Sigmoid colon (tissue), 7 donors: ENCODE measurements at regions of chr3 and their contacts with region 1.

Region 1: DNA sequence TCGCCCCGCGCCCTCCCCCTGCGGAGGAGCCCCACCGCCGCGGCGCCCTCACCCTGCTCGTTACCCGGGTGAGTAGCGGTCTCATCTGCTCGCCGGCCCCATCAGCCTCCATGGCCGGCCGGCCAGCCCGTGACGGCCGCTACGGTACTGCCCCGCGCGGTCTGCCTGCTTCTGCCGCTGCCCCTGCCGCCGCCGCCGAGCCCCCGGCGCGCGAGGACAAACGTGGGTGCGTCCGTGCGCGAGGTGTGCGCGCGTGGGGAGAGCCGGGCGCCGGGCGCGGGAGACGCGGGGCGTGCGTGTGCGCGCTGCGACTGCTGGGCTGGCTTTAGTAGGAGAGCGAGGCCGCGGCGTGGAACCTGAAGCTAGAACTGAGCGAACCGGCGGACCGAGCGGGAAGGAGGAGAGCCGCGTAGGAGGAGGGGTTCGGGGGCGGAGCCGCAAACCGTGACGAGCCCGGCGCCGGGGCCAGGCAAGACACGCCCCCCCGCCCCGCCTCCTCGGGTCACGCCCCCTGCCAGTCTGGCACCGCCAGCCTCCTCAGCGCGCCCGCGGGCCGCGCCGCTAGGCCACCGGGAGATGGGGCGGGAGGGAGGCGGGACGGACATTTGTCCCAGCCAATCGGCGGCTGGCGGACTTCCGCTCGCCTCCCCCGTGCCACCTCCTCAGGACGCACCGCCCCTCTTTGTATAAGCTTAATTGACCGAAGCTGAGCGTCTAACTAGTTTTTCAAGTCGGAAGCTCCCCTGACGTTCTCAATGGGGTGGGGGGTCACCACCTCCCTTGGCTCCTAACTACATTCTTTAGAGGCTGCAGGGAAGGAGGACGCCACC is at the start of gene SLC4A7:
- DNase-seq: peak; percentile 99
- H3K4me3 ChIP-seq: peak within 1 kb of the TSS; percentile 62 to 99 (median 71)
- H3K27ac ChIP-seq: peak within 1 kb of the TSS; percentile 94 to 99 (median 95)
- H3K4me1 ChIP-seq: peaks cover 0 to 53% (median 42%) of the 10 kb centered on the region in 4 donors
- H3K27me3 ChIP-seq: no peaks in the 10 kb centered on the region
- CTCF ChIP-seq: no peak
- EP300 ChIP-seq: peak in 1 of 4 donors; percentile 24
- POLR2A ChIP-seq: peak; percentile 70 to 85
- total RNA-seq, gene SLC4A7: 63.8 to 91.0 (median 75.1) TPM

Region 2: DNA sequence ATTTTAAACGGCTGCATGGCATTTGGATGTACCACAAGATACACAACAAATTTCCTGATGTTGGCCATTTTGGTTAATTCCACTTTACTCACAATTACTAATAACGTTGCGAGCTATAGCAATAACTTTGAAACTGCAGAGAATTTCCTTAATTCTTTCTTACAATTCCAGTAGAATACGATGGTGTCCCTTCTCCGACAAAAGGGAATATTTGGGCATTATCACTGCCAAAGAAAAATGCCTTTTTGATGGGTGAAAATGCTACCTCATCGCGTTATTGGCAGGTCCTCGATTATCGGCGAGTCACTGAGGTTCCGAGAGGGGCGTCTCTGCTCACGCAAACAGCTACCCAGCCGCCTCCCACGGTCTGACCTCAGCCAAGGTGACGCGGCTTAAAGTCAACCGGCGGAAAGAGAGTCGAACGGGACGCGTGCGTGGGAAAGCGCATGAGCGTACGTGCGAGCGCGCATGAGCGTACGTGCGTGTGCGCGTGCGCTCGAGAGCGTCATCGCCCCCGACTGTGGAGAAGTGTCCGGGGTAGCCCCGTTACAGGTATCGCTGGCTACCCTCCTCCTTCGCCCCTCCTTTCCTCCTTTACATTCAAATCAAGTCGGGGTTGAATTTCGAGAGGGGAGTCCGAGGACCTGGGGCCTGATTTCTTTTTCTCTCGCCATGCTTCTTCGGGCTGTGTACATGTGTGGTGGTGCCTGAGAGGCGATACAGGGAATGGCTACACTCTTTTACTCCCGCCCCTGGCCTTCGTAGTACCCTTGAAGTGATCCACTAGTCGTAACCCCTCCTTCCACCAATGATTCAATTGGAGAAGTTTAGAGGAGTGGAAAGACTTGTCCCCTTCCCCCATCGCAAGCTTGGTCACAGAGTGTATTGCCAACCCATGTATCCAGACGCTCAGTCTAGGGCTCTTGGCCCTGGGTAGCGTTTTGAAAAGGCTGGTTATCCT is 1694.4 kb before region 1 on chr3 and contains the start of gene OXSM:
- intact Hi-C with region 1: loop called (anchors 10 kb)
- DNase-seq: peak; percentile 95
- H3K4me3 ChIP-seq: peak within 1 kb of the TSS; percentile 53 to 66 (median 64)
- H3K27ac ChIP-seq: peak within 1 kb of the TSS; percentile 81 to 89 (median 88)
- H3K4me1 ChIP-seq: peaks cover 0 to 38% (median 12%) of the 10 kb centered on the region in 4 donors
- H3K27me3 ChIP-seq: no peaks in the 10 kb centered on the region
- CTCF ChIP-seq: no peak
- EP300 ChIP-seq: peak in 3 of 4 donors; percentile 72 to 95 (median 90)
- POLR2A ChIP-seq: peak; percentile 61 to 86
- total RNA-seq, gene OXSM: 4.3 to 7.8 (median 5.6) TPM

Region 3: GRCh38 chr3:27312044-27312668 is 172.1 kb before region 1 on chr3:
- intact Hi-C with region 1: loop called (anchors 5 kb)
- DNase-seq: no peak
- H3K4me3 ChIP-seq: no peak overlapping the region
- H3K27ac ChIP-seq: no peak overlapping the region
- H3K4me1 ChIP-seq: peaks cover 0 to 39% (median 10%) of the 10 kb centered on the region in 4 donors
- H3K27me3 ChIP-seq: no peaks in the 10 kb centered on the region
- CTCF ChIP-seq: peak; percentile 67 to 85 (median 81)
- EP300 ChIP-seq: no peak
- POLR2A ChIP-seq: no peak

Region 4: DNA sequence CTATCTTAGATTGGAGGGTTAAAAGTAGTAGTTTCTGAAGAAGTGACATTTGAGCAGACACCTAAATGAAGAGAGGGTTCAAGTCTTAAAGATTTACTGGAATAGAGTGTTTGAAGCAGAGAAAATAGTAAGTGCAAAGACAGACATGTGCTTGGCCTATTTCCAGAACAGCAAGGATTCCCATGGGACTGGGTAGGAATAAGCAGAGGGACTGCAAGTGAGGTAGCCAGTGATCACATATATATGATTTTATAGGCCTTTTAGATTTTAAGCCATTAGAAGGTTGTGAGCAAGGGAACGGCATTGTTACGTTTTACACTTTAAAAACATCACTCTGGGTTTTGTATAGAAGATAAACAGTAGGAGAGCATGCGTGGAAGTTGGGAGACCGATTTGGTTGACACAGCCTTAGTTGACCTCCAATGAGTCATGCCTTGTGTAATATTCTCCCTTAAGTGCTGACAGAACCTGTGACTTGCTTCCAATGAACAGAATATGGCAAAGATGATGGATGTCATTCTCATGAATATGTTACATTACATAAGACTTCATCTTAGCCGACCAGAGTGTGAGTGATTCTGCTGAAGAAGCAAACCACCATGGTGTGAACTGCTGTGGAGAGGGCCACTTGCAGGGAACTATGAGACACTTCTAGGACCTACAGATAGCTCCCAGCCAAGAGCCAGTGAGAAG is 37.1 kb after region 1 on chr3:
- intact Hi-C with region 1: loop called (anchors 5 kb)
- DNase-seq: peak; percentile 76
- H3K4me3 ChIP-seq: no peak overlapping the region
- H3K27ac ChIP-seq: peak overlapping the region; percentile 28 to 83 (median 76)
- H3K4me1 ChIP-seq: peaks cover 0 to 41% (median 38%) of the 10 kb centered on the region in 4 donors
- H3K27me3 ChIP-seq: no peaks in the 10 kb centered on the region
- CTCF ChIP-seq: no peak
- EP300 ChIP-seq: peak in 3 of 4 donors; percentile 29 to 90 (median 75)
- POLR2A ChIP-seq: no peak

Region 5: DNA sequence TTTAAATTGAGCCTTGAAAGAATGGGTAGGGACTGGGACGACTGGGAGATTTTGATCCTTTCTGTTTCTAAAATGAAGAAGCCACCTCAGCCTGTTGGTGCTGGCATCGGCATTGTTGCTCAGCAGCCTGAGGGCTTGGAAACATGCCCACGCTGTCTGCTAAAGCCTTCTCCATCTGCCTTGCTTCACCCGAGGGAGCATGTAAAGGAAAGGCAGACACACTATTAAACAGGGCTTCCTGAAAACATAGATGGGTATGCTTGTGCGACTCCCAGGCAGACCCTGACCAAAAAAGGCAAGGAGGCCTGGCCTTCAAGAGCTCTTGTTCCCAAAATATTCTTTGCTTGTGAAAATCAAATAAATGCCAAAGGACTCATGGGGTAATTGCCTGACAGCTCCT is 84.2 kb after region 1 on chr3:
- intact Hi-C with region 1: loop called (anchors 5 kb)
- DNase-seq: peak; percentile 95
- H3K4me3 ChIP-seq: peak overlapping the region in 1 of 4 donors; percentile 3
- H3K27ac ChIP-seq: peak overlapping the region in 3 of 4 donors; percentile 74 to 83 (median 83)
- H3K4me1 ChIP-seq: peaks cover 0 to 46% (median 42%) of the 10 kb centered on the region in 4 donors
- H3K27me3 ChIP-seq: no peaks in the 10 kb centered on the region
- CTCF ChIP-seq: no peak
- EP300 ChIP-seq: peak; percentile 64 to 83 (median 76)
- POLR2A ChIP-seq: no peak

Region 6: DNA sequence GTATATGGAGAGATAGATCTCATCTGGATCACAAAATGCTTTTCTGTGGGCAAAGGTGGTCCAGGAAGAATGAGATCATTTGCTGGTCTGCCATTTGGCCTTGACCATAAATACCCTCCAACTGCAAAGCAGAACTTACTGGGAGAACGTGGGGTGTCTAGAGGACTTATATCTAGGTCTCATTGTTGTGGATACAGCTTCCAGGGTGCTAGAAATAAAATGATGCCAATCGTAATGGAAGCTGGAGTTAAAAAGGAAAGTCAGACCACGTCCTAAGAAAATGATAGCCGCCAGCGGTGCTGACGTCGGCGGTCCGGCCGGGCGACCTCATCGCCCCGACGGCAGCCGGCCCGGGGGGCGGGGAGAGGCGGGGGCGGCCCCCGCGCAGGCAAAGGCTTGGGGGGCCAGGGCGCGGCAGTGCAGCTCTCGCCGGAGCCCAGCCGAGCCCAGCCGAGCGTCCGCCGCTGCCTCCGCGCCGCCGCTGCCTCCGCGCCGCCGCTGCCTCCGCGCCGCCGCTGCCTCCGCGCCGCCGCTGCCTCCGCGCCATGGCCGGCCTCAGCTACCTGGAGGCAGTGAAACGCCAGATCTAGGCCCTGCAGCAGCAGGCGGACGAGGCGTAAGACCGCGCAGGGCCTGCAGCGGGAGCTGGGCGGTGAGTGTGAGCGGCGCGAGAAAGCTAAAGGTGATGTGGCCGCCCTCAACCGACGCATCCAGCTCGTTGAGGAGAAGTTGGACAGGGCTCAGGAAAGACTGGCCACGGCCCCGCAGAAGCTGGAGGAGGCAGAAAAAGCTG is 148.4 kb after region 1 on chr3:
- intact Hi-C with region 1: loop called (anchors 2 kb)
- DNase-seq: peak; percentile 79
- H3K4me3 ChIP-seq: peak overlapping the region; percentile 43 to 59 (median 58)
- H3K27ac ChIP-seq: peak overlapping the region; percentile 85 to 87 (median 86)
- H3K4me1 ChIP-seq: peaks cover 0 to 9% (median 0%) of the 10 kb centered on the region in 4 donors
- H3K27me3 ChIP-seq: no peaks in the 10 kb centered on the region
- CTCF ChIP-seq: no peak
- EP300 ChIP-seq: no peak
- POLR2A ChIP-seq: no peak

Region 7: DNA sequence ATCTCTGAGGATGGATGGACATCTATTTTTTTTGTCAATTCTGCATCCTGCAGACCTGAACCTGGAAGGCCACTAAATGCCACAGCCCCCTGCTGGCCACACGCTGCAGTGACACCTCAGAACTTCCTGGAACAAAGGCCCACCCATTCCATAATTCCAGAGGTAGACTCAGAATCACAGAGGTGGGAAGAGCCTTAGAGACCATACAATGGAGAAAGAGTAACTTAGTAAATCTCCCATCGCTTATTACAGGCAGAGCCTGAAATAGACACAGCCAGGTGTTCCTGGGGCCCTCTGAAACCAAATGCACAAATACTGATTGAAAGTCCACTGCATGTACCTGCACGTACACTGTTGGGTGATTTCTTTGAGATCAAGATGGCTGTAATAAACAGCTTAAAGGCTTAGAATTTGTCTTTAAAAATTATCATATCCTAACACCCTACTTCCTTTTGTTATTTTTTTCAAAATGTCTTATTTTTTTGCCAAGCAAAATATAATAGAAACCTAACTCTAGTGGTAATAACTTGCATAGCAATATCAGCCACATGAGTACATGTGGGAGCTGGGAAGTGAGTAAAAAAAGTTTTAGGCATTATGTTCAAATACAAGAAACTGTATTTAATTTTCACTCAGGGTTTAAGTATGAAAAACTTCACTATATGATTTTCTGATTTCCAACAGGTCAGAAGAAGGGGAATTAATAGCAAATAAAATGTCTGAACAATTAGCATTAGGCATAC is 175.2 kb after region 1 on chr3:
- intact Hi-C with region 1: no loop called
- DNase-seq: no peak
- H3K4me3 ChIP-seq: no peak overlapping the region
- H3K27ac ChIP-seq: no peak overlapping the region
- H3K4me1 ChIP-seq: no peaks in the 10 kb centered on the region
- H3K27me3 ChIP-seq: no peaks in the 10 kb centered on the region
- CTCF ChIP-seq: peak; percentile 29 to 69 (median 62)
- EP300 ChIP-seq: no peak
- POLR2A ChIP-seq: no peak

Region 8: GRCh38 chr3:27681245-27681748 is 197.1 kb after region 1 on chr3:
- intact Hi-C with region 1: loop called (anchors 5 kb)
- DNase-seq: no peak
- H3K4me3 ChIP-seq: peak overlapping the region in 3 of 4 donors; percentile 16 to 21 (median 17)
- H3K27ac ChIP-seq: peak overlapping the region in 3 of 4 donors; percentile 10 to 50 (median 47)
- H3K4me1 ChIP-seq: peaks cover 0 to 19% (median 15%) of the 10 kb centered on the region in 4 donors
- H3K27me3 ChIP-seq: no peaks in the 10 kb centered on the region
- CTCF ChIP-seq: peak; percentile 37 to 63 (median 54)
- EP300 ChIP-seq: peak in 1 of 4 donors; percentile 25
- POLR2A ChIP-seq: no peak